ENCODE measurements at regions of chr7 and their contacts with region 1.

Region 1: GRCh38 chr7:69803699-69804516 is 205.6 kb downstream of the AUTS2 start:
- DNase-seq: no peak
- ATAC-seq: no peak
- H3K4me3 ChIP-seq: no peak overlapping the region
- H3K27ac ChIP-seq: no peak overlapping the region
- H3K4me1 ChIP-seq: no peaks in the 10 kb centered on the region
- H3K27me3 ChIP-seq: no peaks in the 10 kb centered on the region
- CTCF ChIP-seq: no peak
- EP300 ChIP-seq: no peak
- POLR2A ChIP-seq: no peak
- RAD21 ChIP-seq: no peak

Region 2: DNA sequence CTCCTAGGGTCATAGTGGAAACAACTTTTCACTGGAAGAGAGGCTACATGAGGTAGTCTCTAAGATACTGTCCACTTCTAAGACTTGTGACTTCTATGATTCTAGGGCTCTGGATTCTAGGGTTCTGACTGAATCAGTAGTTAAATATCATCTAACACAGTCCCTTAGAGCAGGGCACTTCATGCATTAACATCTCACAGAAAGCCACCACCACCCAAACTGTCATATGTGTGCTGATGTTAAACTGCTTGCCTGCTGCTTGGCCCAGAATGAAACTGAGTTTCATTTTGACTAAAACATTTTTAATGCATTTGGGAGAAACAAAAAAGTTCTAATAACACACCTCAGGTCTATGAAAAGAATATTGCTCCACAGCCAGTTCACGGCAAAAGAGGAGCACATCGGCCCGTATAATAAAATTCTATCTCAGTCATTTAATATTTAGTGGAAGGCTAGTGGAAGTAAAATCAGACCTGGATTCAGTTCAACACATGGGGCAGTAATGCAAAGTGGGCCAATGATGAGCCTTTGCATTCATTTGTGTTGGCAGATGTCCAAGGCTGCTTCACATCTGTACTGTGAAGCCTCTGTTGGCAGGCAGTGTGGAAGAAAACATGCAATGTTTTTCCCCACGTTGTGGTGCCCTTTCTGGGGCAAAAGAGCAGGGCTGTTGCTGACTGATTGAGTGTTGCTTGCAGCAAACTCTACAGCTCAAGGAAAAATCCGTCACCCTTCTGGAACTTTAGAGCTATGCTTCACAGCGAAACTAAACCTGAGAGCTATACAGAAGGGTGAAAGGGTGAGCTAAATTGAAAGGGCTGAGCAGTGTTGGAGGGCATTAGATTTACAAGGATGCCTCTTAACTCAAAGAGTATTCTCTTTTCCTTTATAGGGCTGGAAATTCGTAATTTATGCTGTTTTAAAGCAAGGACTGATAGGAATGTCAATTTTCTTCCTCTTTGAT is 239.2 kb before region 1 on chr7:
- CTCF ChIA-PET with region 1: no interaction called
- POLR2A ChIA-PET with region 1: no interaction called
- in situ Hi-C with region 1: no loop called
- intact Hi-C with region 1: no loop called
- DNase-seq: peak in 1 of 4 experiments; percentile 6
- ATAC-seq: no peak
- H3K4me3 ChIP-seq: no peak overlapping the region
- H3K27ac ChIP-seq: no peak overlapping the region
- H3K4me1 ChIP-seq: no peaks in the 10 kb centered on the region
- H3K27me3 ChIP-seq: peaks cover 3 to 6% of the 10 kb centered on the region in 2 experiments; a peak in 2 of 5 replicates
- CTCF ChIP-seq: no peak
- EP300 ChIP-seq: no peak
- POLR2A ChIP-seq: no peak
- RAD21 ChIP-seq: no peak

Region 3: GRCh38 chr7:69739931-69740431 is 63.9 kb before region 1 on chr7:
- CTCF ChIA-PET with region 1: no interaction called
- POLR2A ChIA-PET with region 1: no interaction called
- in situ Hi-C with region 1: no loop called
- intact Hi-C with region 1: loop called (anchors 10 kb)
- DNase-seq: no peak
- ATAC-seq: no peak
- H3K4me3 ChIP-seq: no peak overlapping the region
- H3K27ac ChIP-seq: no peak overlapping the region
- H3K4me1 ChIP-seq: no peaks in the 10 kb centered on the region
- H3K27me3 ChIP-seq: no peaks in the 10 kb centered on the region
- CTCF ChIP-seq: no peak
- EP300 ChIP-seq: no peak
- POLR2A ChIP-seq: no peak
- RAD21 ChIP-seq: no peak

Region 4: GRCh38 chr7:70574970-70575799 is 771.3 kb after region 1 on chr7:
- CTCF ChIA-PET with region 1: no interaction called
- POLR2A ChIA-PET with region 1: no interaction called
- in situ Hi-C with region 1: no loop called
- intact Hi-C with region 1: no loop called
- DNase-seq: no peak
- ATAC-seq: no peak
- H3K4me3 ChIP-seq: no peak overlapping the region
- H3K27ac ChIP-seq: no peak overlapping the region
- H3K4me1 ChIP-seq: peaks cover 0 to 7% of the 10 kb centered on the region in 2 experiments; a peak in 2 of 5 replicates
- H3K27me3 ChIP-seq: peaks cover 0 to 5% of the 10 kb centered on the region in 2 experiments; a peak in 2 of 5 replicates
- CTCF ChIP-seq: no peak
- EP300 ChIP-seq: no peak
- POLR2A ChIP-seq: no peak
- RAD21 ChIP-seq: no peak